Psoas muscle (tissue), 8 donors: ENCODE measurements at regions of chr3 and their contacts with region 1.

Region 1: DNA sequence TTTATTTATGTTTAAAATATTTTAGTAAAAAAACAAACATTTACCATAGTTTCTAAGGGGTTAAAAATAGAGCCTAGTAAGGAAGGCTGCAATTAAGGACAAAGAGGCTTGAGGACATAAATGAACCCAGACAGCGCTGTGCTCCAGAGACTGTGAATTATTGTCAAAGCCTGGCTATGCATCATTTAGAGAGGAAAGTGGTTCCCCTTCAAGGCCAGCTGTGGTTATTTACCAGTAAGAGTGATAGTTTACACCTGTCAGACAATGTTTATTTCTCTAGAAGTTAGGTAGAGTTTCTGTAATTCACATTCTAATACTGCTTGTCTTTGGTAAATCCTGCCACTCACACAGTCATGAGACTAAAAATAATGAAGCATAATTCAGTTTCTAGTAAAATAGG is 32.4 kb upstream of the PIK3R4 start:
- DNase-seq: no peak
- ATAC-seq: no peak
- H3K4me3 ChIP-seq: no peak overlapping the region
- H3K27ac ChIP-seq: no peak overlapping the region
- H3K4me1 ChIP-seq: peaks cover 5% of the 10 kb centered on the region
- H3K27me3 ChIP-seq: no peaks in the 10 kb centered on the region
- CTCF ChIP-seq: no peak

Region 2: DNA sequence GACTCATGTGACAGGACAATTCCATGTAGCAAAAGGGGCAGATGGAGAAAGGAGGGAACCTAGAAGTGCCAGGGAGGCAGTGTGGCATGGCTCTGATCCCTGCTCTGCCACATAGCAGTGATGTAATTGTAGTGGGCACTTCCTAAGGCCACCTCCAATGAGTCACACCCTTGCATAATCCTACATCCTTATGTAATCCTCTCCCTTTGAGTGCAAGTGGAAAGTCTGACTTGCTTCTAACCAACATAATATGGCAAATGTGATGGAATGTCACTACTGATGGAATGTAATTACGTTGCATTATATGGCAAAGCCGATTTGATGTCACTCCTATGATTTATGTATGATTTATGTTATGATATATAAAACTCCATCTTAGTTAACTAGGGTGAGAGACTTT is 41.9 kb after region 1 on chr3:
- intact Hi-C with region 1: loop called in 1 of 2 experiments (anchors 5 kb)
- DNase-seq: no peak
- ATAC-seq: peak; percentile 96 to 99 (median 98)
- H3K4me3 ChIP-seq: no peak overlapping the region
- H3K27ac ChIP-seq: peak overlapping the region; percentile 12
- H3K4me1 ChIP-seq: no peaks in the 10 kb centered on the region
- H3K27me3 ChIP-seq: no peaks in the 10 kb centered on the region
- CTCF ChIP-seq: no peak